ENCODE measurements at regions of chr15 and their contacts with region 1.

Region 1: GRCh38 chr15:61034678-61035291 is 194.3 kb downstream of the RORA start:
- DNase-seq: peak; percentile 43
- H3K4me3 ChIP-seq: no peak overlapping the region
- H3K27me3 ChIP-seq: no peaks in the 10 kb centered on the region
- CTCF ChIP-seq: no peak

Region 2: GRCh38 chr15:60362321-60363086 is 672.3 kb before region 1 on chr15:
- CTCF ChIA-PET with region 1: no interaction called
- POLR2A ChIA-PET with region 1: interaction called, 17 read pairs
- DNase-seq: peak; percentile 63
- H3K4me3 ChIP-seq: no peak overlapping the region
- H3K27me3 ChIP-seq: no peaks in the 10 kb centered on the region
- CTCF ChIP-seq: no peak

Region 3: DNA sequence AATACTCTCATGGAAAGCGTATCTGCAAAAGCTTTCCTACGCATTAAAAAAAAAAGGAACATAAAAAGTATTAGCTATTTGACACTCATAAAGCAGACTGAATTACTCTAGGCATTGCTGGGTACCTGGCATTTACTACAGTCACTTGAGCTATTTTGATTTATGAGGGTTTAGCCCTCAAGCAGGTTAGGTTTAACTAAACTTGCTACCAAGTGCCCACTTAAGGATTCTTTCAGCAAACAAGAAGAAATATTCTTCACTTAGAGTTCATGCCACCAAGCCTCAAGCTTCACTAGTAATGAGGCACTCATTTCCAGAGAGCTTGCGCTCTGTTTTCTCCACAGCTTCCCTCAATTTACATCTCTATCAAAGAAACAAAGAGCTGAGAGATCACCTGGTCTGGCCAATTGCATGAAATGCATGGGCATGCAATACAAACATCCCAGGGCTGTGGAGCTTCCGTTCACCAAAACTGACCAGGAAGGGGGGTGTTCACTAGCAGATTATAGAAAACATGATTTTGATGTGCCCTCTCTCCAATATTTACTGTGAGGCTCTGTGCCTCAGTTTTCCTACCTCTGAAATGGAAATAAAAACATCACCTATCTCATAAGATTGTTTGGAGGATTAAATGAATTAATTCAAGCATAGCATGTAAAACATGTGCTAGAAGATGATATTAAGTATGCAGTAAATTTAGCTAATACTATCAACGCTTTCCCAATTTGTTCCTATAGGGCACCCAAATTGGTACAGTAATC is 23.0 kb before region 1 on chr15:
- CTCF ChIA-PET with region 1: no interaction called
- POLR2A ChIA-PET with region 1: interaction called, 15 read pairs
- DNase-seq: no peak
- H3K4me3 ChIP-seq: no peak overlapping the region
- H3K27me3 ChIP-seq: no peaks in the 10 kb centered on the region
- CTCF ChIP-seq: no peak

Region 4: DNA sequence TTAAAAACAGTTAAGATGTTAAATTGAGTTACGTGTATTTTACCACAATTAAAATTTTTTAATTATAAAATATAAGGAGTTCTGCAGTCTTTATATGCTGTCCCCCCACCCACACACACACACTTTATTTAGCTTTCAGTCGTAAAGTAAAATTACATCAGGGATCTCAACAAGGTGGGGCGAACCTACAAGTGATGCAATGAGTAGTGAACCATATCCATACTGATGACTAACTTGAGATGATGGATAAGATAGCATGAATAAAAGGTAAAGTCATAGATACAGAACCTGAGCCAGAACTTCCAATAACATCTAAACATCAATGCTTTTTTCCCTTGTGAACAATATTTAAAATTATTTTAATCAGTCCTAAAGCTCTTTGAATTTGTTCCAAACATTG is 948.3 kb after region 1 on chr15:
- CTCF ChIA-PET with region 1: no interaction called
- POLR2A ChIA-PET with region 1: interaction called, 14 read pairs
- DNase-seq: no peak
- H3K4me3 ChIP-seq: no peak overlapping the region
- H3K27me3 ChIP-seq: no peaks in the 10 kb centered on the region
- CTCF ChIP-seq: no peak

Measured in BJ (cell line).